Sigmoid colon (tissue), 7 donors: ENCODE measurements at regions of chr10 and their contacts with region 1.

Region 1: DNA sequence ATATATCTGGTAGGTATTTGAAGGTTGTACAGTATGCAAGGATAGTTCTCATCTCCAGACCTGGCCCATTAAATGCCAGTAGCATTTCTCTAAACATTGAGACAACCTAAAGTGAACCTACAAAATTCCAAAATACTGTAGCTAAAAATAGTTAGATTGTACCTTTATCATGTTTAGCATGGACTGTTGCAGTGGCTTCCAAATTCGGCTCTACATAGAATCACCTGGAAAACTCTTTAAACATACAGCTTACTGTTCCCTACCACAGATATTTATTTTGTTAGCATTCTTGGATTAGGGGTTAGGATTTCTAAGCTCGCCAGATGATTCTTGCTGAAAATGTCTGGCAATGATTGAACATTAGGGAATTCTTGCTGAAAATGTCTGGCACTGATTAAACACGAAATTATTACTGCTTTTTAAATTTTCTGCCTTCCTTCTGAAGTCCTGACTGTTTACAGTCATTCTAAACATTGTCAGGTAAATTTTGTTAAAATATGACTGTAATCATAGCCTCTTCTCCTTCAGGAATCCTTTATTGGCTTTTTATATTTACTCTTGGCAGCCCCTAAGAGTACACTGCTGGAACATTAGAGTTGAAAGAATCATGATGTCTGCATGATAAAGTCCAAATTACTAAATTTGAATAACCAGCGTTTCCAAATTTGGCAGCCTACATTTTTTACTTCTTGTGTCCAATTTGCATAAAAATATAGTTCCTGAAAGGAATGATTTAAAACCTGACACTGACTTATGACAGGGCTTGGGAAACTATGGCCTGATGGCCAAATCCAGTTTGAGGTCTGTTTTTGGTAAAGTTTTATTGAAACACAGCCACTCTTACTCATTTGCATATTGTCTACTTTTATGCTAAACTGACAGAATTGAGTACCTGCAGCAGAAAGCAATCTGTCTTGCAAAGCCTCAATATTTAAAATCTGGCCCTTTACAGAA is 40.3 kb downstream of the SHOC2 start:
- DNase-seq: no peak
- H3K4me3 ChIP-seq: no peak overlapping the region
- H3K27ac ChIP-seq: peak overlapping the region in 2 of 4 donors; percentile 29 to 36
- H3K4me1 ChIP-seq: peaks cover 0 to 64% (median 43%) of the 10 kb centered on the region in 4 donors
- H3K27me3 ChIP-seq: no peaks in the 10 kb centered on the region
- CTCF ChIP-seq: no peak
- EP300 ChIP-seq: no peak
- POLR2A ChIP-seq: no peak

Region 2: DNA sequence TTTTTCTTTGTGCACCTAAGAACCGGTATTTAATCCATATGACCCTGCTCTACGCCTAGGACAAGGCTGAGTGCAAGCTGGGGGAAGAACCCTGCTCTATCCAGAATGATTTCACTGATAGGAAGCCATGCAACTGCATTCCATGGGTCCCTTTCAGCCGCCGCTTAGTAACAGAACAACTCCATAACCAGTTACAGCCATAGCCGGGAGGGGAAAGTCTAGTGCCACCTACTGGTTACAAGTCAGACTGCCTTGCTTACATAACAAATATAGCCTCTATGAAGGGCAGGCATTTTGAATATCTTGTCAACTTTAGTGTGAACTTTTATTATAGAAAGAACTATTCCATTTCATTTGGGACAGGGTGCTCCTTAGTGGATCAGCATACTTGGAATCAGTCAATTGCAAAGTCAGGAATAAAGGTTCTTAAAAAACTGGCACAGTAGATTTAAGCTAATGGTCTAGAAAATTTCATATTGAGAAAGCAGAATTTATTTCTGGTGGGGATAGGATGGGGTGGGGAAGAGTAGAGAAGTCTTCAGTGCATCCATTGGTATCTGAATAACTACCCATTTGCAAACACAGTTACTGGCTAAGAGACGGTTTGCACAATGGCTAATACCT is 638.9 kb after region 1 on chr10:
- intact Hi-C with region 1: loop called (anchors 5 kb)
- DNase-seq: peak; percentile 69
- H3K4me3 ChIP-seq: no peak overlapping the region
- H3K27ac ChIP-seq: no peak overlapping the region
- H3K4me1 ChIP-seq: no peaks in the 10 kb centered on the region
- H3K27me3 ChIP-seq: no peaks in the 10 kb centered on the region
- CTCF ChIP-seq: peak; percentile 7 to 62 (median 46)
- EP300 ChIP-seq: no peak
- POLR2A ChIP-seq: no peak